Activated CD4-positive, alpha-beta memory T cell treated with anti-CD3 and anti-CD28 coated beads, Interleukin-2, amount 10 ng/mL, durations not matched to agents 7 days and 5 days (primary cell): ENCODE measurements at regions of chr7 and their contacts with region 1.

Region 1: DNA sequence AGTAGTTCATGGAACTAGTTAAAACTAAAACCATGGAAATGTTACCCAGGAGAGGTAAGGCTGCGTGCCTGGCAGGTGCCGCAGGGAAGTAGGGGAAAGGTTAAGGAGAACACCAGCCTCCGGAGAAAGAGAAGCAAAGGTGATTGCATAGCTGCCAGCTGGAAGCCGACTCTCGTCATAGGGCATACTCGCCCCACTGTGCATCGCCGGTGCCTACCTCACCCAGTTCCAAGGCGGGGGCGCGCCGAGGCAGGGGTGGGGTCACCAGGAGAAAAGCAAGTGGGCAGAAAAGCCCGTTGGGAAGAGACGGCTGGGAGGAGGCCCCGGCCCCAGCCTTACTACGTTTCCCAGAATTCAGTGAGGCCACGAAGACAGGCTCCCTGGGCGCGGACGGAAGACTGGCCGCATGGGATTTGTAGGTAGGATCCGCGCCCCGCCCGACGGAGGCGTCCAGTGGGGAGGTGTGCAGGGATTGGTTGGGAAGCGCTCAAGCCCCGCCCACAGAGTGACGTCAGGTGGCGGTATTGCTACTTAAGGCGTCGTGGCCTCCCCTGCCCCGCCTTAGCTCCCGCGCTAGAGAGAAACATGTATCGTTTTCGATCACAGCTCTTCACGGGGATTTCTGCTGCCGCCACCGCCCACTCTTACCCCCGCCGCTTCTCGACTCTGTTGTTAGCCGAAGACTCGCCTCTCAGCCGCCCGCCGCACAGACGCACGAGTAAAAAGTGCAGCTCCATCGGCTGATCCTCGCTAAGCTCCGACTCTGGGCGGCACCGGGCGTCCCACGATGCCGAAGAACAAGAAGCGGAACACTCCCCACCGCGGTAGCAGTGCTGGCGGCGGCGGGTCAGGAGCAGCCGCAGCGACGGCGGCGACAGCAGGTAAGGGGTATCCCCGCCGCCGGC is at the start of gene IFRD1:
- DNase-seq: peak; percentile 98
- H3K4me3 Mint-ChIP-seq: peak within 1 kb of the TSS; percentile 94
- H3K27ac Mint-ChIP-seq: peak within 1 kb of the TSS; percentile 98
- H3K4me1 Mint-ChIP-seq: peaks cover 39% of the 10 kb centered on the region
- H3K27me3 Mint-ChIP-seq: no peaks in the 10 kb centered on the region
- total RNA-seq, gene IFRD1: 33.4 to 36.1 TPM

Region 2: GRCh38 chr7:112206238-112207044 is 243.7 kb before region 1 on chr7 and contains the starts of genes DOCK4 and ZNF277:
- CTCF ChIA-PET with region 1: interaction called, 3 read pairs
- POLR2A ChIA-PET with region 1: interaction called, 33 read pairs
- DNase-seq: peak; percentile 99
- H3K4me3 Mint-ChIP-seq: peak within 1 kb of the TSS; percentile 87
- H3K27ac Mint-ChIP-seq: peak within 1 kb of the TSS; percentile 78
- H3K4me1 Mint-ChIP-seq: peaks cover 37% of the 10 kb centered on the region
- H3K27me3 Mint-ChIP-seq: peaks cover 34% of the 10 kb centered on the region
- total RNA-seq, gene DOCK4: 0.35 to 0.50 TPM
- total RNA-seq, gene ZNF277: 27.4 to 27.6 TPM

Region 3: GRCh38 chr7:112286250-112287086 is 163.7 kb before region 1 on chr7:
- CTCF ChIA-PET with region 1: no interaction called
- POLR2A ChIA-PET with region 1: no interaction called
- DNase-seq: no peak
- H3K4me3 Mint-ChIP-seq: no peak overlapping the region
- H3K27ac Mint-ChIP-seq: no peak overlapping the region
- H3K4me1 Mint-ChIP-seq: peaks cover 8% of the 10 kb centered on the region
- H3K27me3 Mint-ChIP-seq: no peaks in the 10 kb centered on the region

Region 4: GRCh38 chr7:112361154-112361553 is 89.0 kb before region 1 on chr7:
- CTCF ChIA-PET with region 1: no interaction called
- POLR2A ChIA-PET with region 1: no interaction called
- DNase-seq: no peak
- H3K4me3 Mint-ChIP-seq: no peak overlapping the region
- H3K27ac Mint-ChIP-seq: no peak overlapping the region
- H3K4me1 Mint-ChIP-seq: no peaks in the 10 kb centered on the region
- H3K27me3 Mint-ChIP-seq: peaks cover 6% of the 10 kb centered on the region

Region 5: GRCh38 chr7:112422842-112423496 is 27.2 kb before region 1 on chr7:
- CTCF ChIA-PET with region 1: interaction called, 3 read pairs
- POLR2A ChIA-PET with region 1: interaction called, 13 read pairs
- DNase-seq: peak; percentile 23
- H3K4me3 Mint-ChIP-seq: no peak overlapping the region
- H3K27ac Mint-ChIP-seq: no peak overlapping the region
- H3K4me1 Mint-ChIP-seq: peaks cover 19% of the 10 kb centered on the region
- H3K27me3 Mint-ChIP-seq: peaks cover 2% of the 10 kb centered on the region

Region 6: DNA sequence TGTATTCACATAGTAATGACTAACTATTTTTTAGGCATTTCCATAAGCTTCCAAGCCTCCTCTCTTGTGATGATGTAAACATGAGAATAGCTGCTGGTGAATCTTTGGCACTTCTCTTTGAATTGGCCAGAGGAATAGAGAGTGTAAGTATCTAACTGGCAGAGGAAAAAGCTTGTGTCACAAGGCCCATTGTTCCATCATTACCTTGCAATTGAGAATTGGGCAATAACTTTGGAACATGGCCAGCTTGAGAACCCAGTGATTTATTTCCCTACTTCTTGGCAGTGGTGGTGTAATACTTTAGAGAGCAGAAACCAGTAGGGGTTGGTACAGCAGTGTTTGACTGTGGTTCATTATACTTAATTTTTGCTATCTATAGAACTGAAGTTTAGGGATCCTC is 12.1 kb after region 1 on chr7:
- CTCF ChIA-PET with region 1: interaction called, 9 read pairs
- POLR2A ChIA-PET with region 1: interaction called, 29 read pairs
- DNase-seq: no peak
- H3K4me3 Mint-ChIP-seq: no peak overlapping the region
- H3K27ac Mint-ChIP-seq: no peak overlapping the region
- H3K4me1 Mint-ChIP-seq: peaks cover 2% of the 10 kb centered on the region
- H3K27me3 Mint-ChIP-seq: no peaks in the 10 kb centered on the region

Region 7: DNA sequence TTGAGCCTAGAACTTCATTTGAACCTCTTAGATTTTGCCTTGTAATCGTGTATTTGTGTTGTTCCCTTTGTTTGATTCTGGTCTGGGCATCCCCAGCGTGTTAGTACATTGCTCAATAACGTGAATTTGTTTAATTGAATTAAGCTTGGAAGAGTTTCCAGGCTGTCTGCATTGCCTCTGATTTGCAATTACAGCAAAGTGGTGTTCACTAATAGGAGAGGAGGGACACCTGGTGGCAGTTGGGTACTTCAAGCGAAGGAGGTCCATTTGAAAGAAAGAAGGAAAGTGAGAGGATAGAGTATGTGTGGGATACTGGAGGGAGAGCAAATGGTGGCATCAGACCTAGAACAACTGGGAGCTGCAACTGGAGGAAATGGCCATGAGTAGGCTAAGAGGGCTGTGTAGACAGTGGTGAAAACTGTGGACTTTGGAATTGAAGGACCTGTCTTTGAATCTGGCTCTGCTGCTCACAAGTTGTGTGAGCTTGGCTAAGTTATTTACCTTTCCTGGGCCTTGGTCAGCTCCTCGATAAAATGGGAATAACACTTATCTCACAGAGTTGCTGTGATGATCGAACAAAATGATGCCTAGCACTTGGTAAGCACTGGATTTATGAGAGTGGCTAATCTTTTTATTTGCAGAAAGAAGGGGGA is 45.8 kb after region 1 on chr7:
- CTCF ChIA-PET with region 1: no interaction called
- POLR2A ChIA-PET with region 1: no interaction called
- DNase-seq: peak; percentile 28
- H3K4me3 Mint-ChIP-seq: no peak overlapping the region
- H3K27ac Mint-ChIP-seq: no peak overlapping the region
- H3K4me1 Mint-ChIP-seq: no peaks in the 10 kb centered on the region
- H3K27me3 Mint-ChIP-seq: peaks cover 20% of the 10 kb centered on the region

Region 8: GRCh38 chr7:112510001-112510742 is 60.0 kb after region 1 on chr7:
- CTCF ChIA-PET with region 1: no interaction called
- POLR2A ChIA-PET with region 1: no interaction called
- DNase-seq: no peak
- H3K4me3 Mint-ChIP-seq: no peak overlapping the region
- H3K27ac Mint-ChIP-seq: no peak overlapping the region
- H3K4me1 Mint-ChIP-seq: peaks cover 13% of the 10 kb centered on the region
- H3K27me3 Mint-ChIP-seq: peaks cover 6% of the 10 kb centered on the region